ENCODE measurements at regions of chr6 and their contacts with region 1.

Region 1: DNA sequence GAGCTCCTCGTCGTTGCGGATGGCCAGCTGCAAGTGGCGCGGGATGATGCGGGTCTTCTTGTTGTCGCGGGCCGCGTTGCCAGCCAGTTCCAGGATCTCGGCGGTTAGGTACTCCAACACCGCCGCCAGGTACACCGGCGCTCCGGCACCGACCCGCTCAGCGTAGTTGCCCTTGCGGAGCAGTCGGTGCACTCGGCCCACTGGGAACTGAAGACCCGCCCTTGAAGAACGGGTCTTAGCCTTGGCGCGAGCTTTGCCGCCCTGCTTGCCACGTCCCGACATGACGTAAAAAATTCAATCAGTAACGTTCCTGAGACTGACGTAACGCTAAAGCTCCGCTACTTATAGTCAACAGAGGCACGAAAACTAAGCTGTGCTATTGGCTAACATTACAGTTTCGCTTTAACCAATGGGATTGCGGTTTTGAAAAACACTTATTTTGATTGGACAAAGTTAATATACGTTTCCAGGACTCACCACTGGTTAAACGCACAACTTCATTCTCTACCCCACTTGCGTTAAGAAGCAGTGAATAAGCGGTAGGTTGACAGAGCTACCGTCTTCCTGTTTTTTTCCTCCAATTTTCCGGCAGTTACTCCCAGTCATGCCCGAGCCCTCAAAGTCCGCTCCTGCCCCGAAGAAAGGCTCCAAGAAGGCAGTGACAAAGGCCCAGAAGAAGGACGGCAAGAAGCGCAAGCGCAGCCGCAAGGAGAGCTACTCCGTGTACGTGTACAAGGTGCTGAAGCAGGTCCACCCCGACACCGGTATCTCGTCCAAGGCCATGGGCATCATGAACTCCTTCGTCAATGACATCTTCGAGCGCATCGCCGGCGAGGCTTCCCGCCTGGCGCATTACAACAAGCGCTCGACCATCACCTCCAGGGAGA is 73.9 kb downstream of the OR2B2 start:
- DNase-seq: peak; percentile 85 to 99 (median 92)
- ATAC-seq: peak; percentile 74
- H3K4me3 ChIP-seq: peak overlapping the region; percentile 56
- H3K27ac ChIP-seq: peak overlapping the region; percentile 88
- H3K4me1 ChIP-seq: peaks cover 12 to 13% of the 10 kb centered on the region in 2 experiments; a peak in 3 of 5 replicates
- H3K27me3 ChIP-seq: no peaks in the 10 kb centered on the region
- CTCF ChIP-seq: peak in 1 of 3 experiments; percentile 9; a peak in 1 of 6 replicates
- EP300 ChIP-seq: peak; percentile 35
- POLR2A ChIP-seq: peak; percentile 99
- RAD21 ChIP-seq: peak in 1 of 2 experiments; percentile 4; a peak in 1 of 4 replicates

Region 2: DNA sequence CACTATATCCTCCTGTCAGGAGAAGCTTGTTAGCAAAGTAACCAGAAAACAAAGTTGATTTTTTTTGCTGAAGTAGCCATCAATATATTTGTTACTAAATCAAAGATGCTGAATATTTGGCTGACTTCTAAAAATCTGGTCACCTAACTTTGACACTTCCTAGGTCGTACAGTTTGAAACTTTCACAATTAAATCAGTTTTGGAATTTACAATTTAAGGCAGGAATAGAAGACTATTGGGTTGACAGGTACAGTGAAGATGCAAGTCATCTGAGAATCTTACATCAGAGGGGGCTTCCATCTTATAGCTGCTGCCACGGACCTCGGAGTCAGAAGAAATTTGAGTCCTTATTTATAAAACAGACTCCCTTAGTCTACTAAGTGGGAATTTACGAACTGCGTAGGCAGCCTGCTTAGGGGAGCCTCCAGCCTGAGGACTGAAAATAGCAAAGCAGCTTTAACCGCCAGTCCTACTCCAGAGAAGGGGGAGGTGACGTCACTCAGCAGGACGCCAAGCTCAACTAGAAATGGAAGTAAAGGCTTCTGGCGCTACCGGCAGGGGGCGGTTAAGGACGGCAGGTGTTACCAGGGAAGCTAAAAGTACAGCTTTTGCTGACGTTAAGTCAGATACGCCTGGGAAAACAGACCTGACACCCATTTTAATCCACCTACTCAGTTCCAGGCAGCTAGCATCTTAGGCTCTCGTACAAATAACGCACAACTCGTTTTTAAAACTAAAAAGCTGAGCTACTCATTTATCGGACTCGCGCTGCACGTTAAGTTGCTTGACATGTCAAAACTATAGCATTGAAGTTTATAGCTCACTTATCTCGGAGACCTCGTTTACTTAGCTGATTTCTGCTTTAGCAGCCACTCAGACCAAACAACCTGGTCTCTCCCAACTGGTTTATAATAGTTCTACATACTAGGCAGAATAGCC is 1812.1 kb before region 1 on chr6:
- CTCF ChIA-PET with region 1: no interaction called
- POLR2A ChIA-PET with region 1: interaction called, 8 read pairs
- in situ Hi-C with region 1: loop called (anchors 5 kb)
- intact Hi-C with region 1: loop called (anchors 5 kb)
- DNase-seq: peak; percentile 72 to 98 (median 76)
- ATAC-seq: peak; percentile 43
- H3K4me3 ChIP-seq: peak overlapping the region; percentile 46
- H3K27ac ChIP-seq: peak overlapping the region; percentile 99
- H3K4me1 ChIP-seq: peaks cover 13 to 40% of the 10 kb centered on the region in 2 experiments
- H3K27me3 ChIP-seq: no peaks in the 10 kb centered on the region
- CTCF ChIP-seq: peak; percentile 81 to 98 (median 97)
- EP300 ChIP-seq: peak; percentile 75
- POLR2A ChIP-seq: no peak
- RAD21 ChIP-seq: peak; percentile 48 to 77

Region 3: DNA sequence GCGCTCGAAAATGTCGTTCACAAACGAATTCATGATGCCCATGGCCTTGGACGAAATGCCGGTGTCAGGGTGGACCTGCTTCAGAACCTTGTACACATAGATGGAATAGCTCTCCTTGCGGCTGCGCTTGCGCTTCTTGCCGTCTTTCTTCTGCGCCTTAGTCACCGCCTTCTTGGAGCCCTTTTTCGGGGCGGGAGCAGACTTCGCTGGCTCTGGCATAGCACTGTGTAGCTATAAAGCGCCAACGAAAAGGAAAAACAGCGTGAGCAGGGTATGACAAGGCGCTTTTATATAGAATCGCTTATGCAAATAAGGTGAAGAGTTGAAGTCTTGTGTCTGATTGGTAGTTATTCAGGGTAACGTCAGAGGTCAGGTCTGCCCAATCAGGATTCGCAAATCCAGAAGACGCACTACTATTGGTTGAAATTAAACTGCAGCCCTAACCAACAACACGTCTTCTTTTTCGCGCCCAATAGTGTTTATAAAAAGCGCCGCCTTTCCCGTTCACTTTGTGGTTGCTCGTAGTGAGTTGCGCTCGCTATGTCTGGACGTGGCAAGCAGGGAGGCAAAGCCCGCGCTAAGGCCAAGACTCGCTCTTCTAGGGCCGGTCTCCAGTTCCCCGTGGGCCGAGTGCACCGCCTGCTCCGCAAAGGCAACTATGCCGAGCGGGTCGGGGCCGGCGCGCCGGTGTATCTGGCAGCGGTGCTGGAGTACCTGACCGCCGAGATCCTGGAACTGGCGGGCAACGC is 705.6 kb before region 1 on chr6:
- CTCF ChIA-PET with region 1: no interaction called
- POLR2A ChIA-PET with region 1: interaction called, 14 read pairs
- in situ Hi-C with region 1: no loop called
- intact Hi-C with region 1: loop called (anchors 2 kb)
- DNase-seq: peak; percentile 93 to 100 (median 97)
- ATAC-seq: peak; percentile 68
- H3K4me3 ChIP-seq: peak overlapping the region; percentile 72
- H3K27ac ChIP-seq: peak overlapping the region; percentile 98
- H3K4me1 ChIP-seq: peaks cover 6 to 7% of the 10 kb centered on the region in 2 experiments
- H3K27me3 ChIP-seq: no peaks in the 10 kb centered on the region
- CTCF ChIP-seq: peak in 1 of 3 experiments; percentile 7; a peak in 1 of 6 replicates
- EP300 ChIP-seq: peak; percentile 26; the same call in 1 of the 2 replicates
- POLR2A ChIP-seq: peak; percentile 100
- RAD21 ChIP-seq: peak in 1 of 2 experiments; percentile 36; a peak in 2 of 4 replicates

Region 4: GRCh38 chr6:27795697-27796494 is 42.4 kb before region 1 on chr6:
- CTCF ChIA-PET with region 1: no interaction called
- POLR2A ChIA-PET with region 1: interaction called, 28 read pairs
- in situ Hi-C with region 1: no loop called
- intact Hi-C with region 1: no loop called
- DNase-seq: peak; percentile 66 to 93 (median 74)
- ATAC-seq: peak; percentile 53
- H3K4me3 ChIP-seq: no peak overlapping the region
- H3K27ac ChIP-seq: peak overlapping the region; percentile 2; the same call in 1 of the 3 replicates
- H3K4me1 ChIP-seq: peaks cover 13 to 55% of the 10 kb centered on the region in 2 experiments
- H3K27me3 ChIP-seq: no peaks in the 10 kb centered on the region
- CTCF ChIP-seq: peak; percentile 70 to 95 (median 88); a peak in 5 of 6 replicates
- EP300 ChIP-seq: peak; percentile 81
- POLR2A ChIP-seq: no peak
- RAD21 ChIP-seq: peak; percentile 82 to 89

Region 5: GRCh38 chr6:27825025-27825793 is 13.1 kb before region 1 on chr6:
- CTCF ChIA-PET with region 1: no interaction called
- POLR2A ChIA-PET with region 1: interaction called, 250 read pairs
- in situ Hi-C with region 1: no loop called
- intact Hi-C with region 1: no loop called
- DNase-seq: peak in 1 of 4 experiments; percentile 12
- ATAC-seq: no peak
- H3K4me3 ChIP-seq: peak overlapping the region; percentile 50
- H3K27ac ChIP-seq: peak overlapping the region; percentile 83
- H3K4me1 ChIP-seq: peaks cover 0 to 8% of the 10 kb centered on the region in 2 experiments; a peak in 3 of 5 replicates
- H3K27me3 ChIP-seq: no peaks in the 10 kb centered on the region
- CTCF ChIP-seq: no peak
- EP300 ChIP-seq: no peak
- POLR2A ChIP-seq: peak; percentile 38
- RAD21 ChIP-seq: no peak

Region 6: DNA sequence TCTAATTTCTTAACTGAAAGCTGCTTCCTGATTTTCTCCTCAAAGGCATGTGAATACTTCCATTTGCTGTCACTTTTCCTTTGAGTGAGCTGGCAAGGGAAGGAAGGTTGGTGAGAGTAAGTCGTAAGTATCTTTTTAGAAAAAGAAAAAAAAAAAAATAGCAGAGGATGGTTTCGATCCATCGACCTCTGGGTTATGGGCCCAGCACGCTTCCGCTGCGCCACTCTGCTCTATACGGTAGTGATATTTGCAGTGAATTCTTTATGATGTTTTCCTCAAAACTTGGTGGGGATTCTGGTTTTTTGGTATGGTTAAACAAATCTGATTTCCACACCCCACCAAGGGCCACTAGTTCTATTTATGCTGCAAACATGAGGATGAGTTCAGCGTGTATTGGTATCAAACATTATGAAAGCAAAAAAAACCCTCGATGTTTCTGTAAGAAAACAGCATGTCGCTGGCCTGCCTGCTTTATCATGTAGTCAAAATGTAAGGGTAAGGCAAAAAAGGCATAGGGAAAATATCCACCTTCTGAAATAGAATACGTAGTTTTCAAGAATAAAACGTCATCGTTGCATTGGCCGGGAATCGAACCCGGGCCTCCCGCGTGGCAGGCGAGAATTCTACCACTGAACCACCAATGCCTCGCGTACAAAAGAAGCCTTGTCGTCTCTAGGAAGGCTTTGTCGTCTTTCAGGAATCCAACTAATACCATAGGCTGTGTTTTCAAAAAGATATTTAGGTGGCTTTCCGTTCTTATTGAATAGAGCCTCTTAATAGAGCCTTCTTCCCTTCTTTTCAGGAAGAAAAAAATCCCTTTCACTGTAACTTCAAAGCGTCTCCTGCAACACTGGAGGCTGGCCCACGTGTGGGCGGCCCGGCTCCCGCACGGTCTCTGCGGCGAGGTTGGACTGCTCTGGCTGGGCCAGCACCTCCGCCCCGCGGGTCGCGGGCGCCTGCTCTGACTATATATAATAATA is 64.3 kb after region 1 on chr6:
- CTCF ChIA-PET with region 1: no interaction called
- POLR2A ChIA-PET with region 1: interaction called, 826 read pairs
- in situ Hi-C with region 1: no loop called
- intact Hi-C with region 1: no loop called
- DNase-seq: peak; percentile 69 to 88 (median 75)
- ATAC-seq: peak; percentile 90
- H3K4me3 ChIP-seq: peak overlapping the region; percentile 39
- H3K27ac ChIP-seq: peak overlapping the region; percentile 79
- H3K4me1 ChIP-seq: peaks cover 7 to 28% of the 10 kb centered on the region in 2 experiments; a peak in 4 of 5 replicates
- H3K27me3 ChIP-seq: no peaks in the 10 kb centered on the region
- CTCF ChIP-seq: no peak
- EP300 ChIP-seq: peak; percentile 76
- POLR2A ChIP-seq: peak; percentile 99
- RAD21 ChIP-seq: peak; percentile 25 to 32; a peak in 3 of 4 replicates

Region 7: GRCh38 chr6:27940766-27941165 is 102.5 kb after region 1 on chr6:
- CTCF ChIA-PET with region 1: no interaction called
- POLR2A ChIA-PET with region 1: no interaction called
- in situ Hi-C with region 1: no loop called
- intact Hi-C with region 1: no loop called
- DNase-seq: peak; percentile 60 to 74 (median 66)
- ATAC-seq: peak; percentile 84
- H3K4me3 ChIP-seq: no peak overlapping the region
- H3K27ac ChIP-seq: no peak overlapping the region
- H3K4me1 ChIP-seq: peaks cover 0 to 4% of the 10 kb centered on the region in 2 experiments; a peak in 2 of 5 replicates
- H3K27me3 ChIP-seq: no peaks in the 10 kb centered on the region
- CTCF ChIP-seq: no peak
- EP300 ChIP-seq: peak; percentile 52; the same call in 1 of the 2 replicates
- POLR2A ChIP-seq: no peak
- RAD21 ChIP-seq: no peak

Region 8: GRCh38 chr6:28235912-28236452 is 397.7 kb after region 1 on chr6:
- CTCF ChIA-PET with region 1: no interaction called
- POLR2A ChIA-PET with region 1: no interaction called
- in situ Hi-C with region 1: no loop called
- intact Hi-C with region 1: no loop called
- DNase-seq: no peak
- ATAC-seq: no peak
- H3K4me3 ChIP-seq: no peak overlapping the region
- H3K27ac ChIP-seq: no peak overlapping the region
- H3K4me1 ChIP-seq: no peaks in the 10 kb centered on the region
- H3K27me3 ChIP-seq: no peaks in the 10 kb centered on the region
- CTCF ChIP-seq: no peak
- EP300 ChIP-seq: no peak
- POLR2A ChIP-seq: no peak
- RAD21 ChIP-seq: no peak

Region 9: GRCh38 chr6:28747631-28748157 is 909.4 kb after region 1 on chr6:
- CTCF ChIA-PET with region 1: no interaction called
- POLR2A ChIA-PET with region 1: no interaction called
- in situ Hi-C with region 1: no loop called
- intact Hi-C with region 1: loop called (anchors 10 kb)
- DNase-seq: peak; percentile 77 to 99 (median 83)
- ATAC-seq: peak; percentile 84
- H3K4me3 ChIP-seq: peak overlapping the region; percentile 46
- H3K27ac ChIP-seq: peak overlapping the region; percentile 64
- H3K4me1 ChIP-seq: peaks cover 8 to 20% of the 10 kb centered on the region in 2 experiments; a peak in 4 of 5 replicates
- H3K27me3 ChIP-seq: no peaks in the 10 kb centered on the region
- CTCF ChIP-seq: no peak
- EP300 ChIP-seq: peak; percentile 88
- POLR2A ChIP-seq: no peak
- RAD21 ChIP-seq: peak in 1 of 2 experiments; percentile 45; a peak in 3 of 4 replicates